H1 (cell line): ENCODE measurements at regions of chr1 and their contacts with region 1.

Region 1: DNA sequence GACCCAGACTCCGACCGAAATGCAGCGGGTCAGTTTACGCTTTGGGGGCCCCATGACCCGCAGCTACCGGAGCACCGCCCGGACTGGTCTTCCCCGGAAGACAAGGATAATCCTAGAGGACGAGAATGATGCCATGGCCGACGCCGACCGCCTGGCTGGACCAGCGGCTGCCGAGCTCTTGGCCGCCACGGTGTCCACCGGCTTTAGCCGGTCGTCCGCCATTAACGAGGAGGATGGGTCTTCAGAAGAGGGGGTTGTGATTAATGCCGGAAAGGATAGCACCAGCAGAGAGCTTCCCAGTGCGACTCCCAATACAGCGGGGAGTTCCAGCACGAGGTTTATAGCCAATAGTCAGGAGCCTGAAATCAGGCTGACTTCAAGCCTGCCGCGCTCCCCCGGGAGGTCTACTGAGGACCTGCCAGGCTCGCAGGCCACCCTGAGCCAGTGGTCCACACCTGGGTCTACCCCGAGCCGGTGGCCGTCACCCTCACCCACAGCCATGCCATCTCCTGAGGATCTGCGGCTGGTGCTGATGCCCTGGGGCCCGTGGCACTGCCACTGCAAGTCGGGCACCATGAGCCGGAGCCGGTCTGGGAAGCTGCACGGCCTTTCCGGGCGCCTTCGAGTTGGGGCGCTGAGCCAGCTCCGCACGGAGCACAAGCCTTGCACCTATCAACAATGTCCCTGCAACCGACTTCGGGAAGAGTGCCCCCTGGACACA is 534 bp downstream of the C1orf56 start:
- DNase-seq: peak in 1 of 2 experiments; percentile 85
- H3K4me3 ChIP-seq: peak overlapping the region; percentile 70 to 96 (median 84)
- H3K27ac ChIP-seq: peak overlapping the region; percentile 60
- H3K4me1 ChIP-seq: peaks cover 0 to 7% (median 3%) of the 10 kb centered on the region in 4 experiments; a peak in 4 of 7 replicates
- H3K27me3 ChIP-seq: no peaks in the 10 kb centered on the region
- CTCF ChIP-seq: peak; percentile 73 to 84 (median 82)
- EP300 ChIP-seq: no peak
- POLR2A ChIP-seq: peak; percentile 53 to 79
- RAD21 ChIP-seq: peak in 1 of 2 experiments; percentile 23; a peak in 2 of 4 replicates

Region 2: GRCh38 chr1:150863724-150864123 is 184.4 kb before region 1 on chr1:
- CTCF ChIA-PET with region 1: no interaction called
- POLR2A ChIA-PET with region 1: no interaction called
- DNase-seq: no peak
- H3K4me3 ChIP-seq: no peak overlapping the region
- H3K27ac ChIP-seq: no peak overlapping the region
- H3K4me1 ChIP-seq: no peaks in the 10 kb centered on the region
- H3K27me3 ChIP-seq: no peaks in the 10 kb centered on the region
- CTCF ChIP-seq: no peak
- EP300 ChIP-seq: no peak
- POLR2A ChIP-seq: no peak
- RAD21 ChIP-seq: no peak

Region 3: DNA sequence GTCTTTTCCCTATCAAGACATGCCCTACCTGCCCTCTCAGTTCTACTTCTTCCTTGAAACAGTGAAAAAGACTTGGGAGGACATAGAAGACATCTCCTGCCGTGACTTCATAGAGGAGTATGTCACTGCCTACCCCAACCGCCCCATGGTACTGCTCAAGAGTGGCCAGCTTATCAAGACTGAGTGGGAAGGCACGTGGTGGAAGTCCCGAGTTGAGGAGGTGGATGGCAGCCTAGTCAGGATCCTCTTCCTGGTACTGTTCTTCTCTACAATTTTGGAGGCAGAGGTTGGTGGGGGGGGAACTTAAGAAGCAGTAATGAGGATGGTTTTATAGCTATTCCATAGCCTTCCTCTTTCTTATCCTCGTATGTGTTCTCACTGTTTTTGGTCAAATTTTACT is 103.2 kb before region 1 on chr1:
- CTCF ChIA-PET with region 1: no interaction called
- POLR2A ChIA-PET with region 1: no interaction called
- DNase-seq: no peak
- H3K4me3 ChIP-seq: no peak overlapping the region
- H3K27ac ChIP-seq: no peak overlapping the region
- H3K4me1 ChIP-seq: no peaks in the 10 kb centered on the region
- H3K27me3 ChIP-seq: no peaks in the 10 kb centered on the region
- CTCF ChIP-seq: no peak
- EP300 ChIP-seq: no peak
- POLR2A ChIP-seq: no peak
- RAD21 ChIP-seq: no peak

Region 4: DNA sequence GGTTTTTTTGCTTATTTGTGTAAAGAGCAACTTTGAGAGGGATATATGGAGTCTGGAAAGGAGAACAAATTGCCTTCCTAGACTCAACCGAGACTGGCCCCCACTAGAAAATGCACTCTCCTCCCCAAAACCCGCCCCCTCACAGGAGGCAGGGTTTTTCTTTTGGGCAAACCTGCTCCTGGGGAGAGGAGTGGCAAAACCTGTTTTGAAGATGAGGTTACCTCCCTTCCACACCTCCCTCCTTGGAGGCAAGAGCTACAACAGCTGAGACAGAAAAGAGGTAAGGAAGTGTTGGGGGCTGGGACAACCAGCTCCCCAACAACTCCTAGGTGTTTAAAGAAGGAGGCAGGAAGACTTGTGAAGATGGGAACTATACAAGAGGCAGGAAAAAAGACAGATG is 11.7 kb before region 1 on chr1 and contains the start of gene BNIPL:
- CTCF ChIA-PET with region 1: interaction called, 9 read pairs
- POLR2A ChIA-PET with region 1: interaction called, 58 read pairs
- DNase-seq: no peak
- H3K4me3 ChIP-seq: peak within 1 kb of the TSS in 2 of 4 experiments; percentile 12 to 41; a peak in 3 of 8 replicates
- H3K27ac ChIP-seq: no peak within 1 kb of the TSS
- H3K4me1 ChIP-seq: peaks cover 0 to 3% (median 0%) of the 10 kb centered on the region in 4 experiments; a peak in 3 of 7 replicates
- H3K27me3 ChIP-seq: no peaks in the 10 kb centered on the region
- CTCF ChIP-seq: no peak
- EP300 ChIP-seq: no peak
- POLR2A ChIP-seq: no peak
- RAD21 ChIP-seq: no peak
- total RNA-seq, gene BNIPL: 2.3 and 2.4 TPM in 2 replicates